ENCODE measurements at regions of chr6 and their contacts with region 1.

Region 1: GRCh38 chr6:10478187-10479040 is 42.7 kb upstream of the GCNT2 start:
- DNase-seq: peak; percentile 66
- CTCF ChIP-seq: peak; percentile 49

Region 2: GRCh38 chr6:10465629-10466504 is 12.5 kb before region 1 on chr6:
- CTCF ChIA-PET with region 1: interaction called, 29 read pairs
- POLR2A ChIA-PET with region 1: no interaction called
- DNase-seq: peak; percentile 50
- CTCF ChIP-seq: peak; percentile 59

Region 3: DNA sequence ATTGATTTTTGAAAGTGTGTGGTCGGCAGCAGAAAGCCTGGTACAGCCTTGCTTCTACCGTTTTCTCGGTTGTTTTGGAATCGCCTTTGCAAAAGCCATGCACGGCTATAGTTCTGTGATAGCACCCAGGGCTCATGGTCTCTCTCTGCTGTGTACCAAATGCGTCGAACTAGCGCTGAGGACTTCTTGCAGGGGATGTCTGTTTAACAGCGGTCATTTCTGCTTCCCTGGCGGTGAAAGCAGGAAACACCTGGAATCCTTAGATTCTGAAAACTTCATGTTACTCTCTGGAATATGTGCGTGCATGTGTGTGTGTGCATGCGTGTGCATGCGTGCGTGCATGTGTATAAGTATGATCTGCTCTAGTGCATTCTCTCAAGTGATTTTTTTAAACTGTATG is 16.6 kb after region 1 on chr6:
- CTCF ChIA-PET with region 1: interaction called, 12 read pairs
- POLR2A ChIA-PET with region 1: no interaction called
- DNase-seq: no peak
- CTCF ChIP-seq: no peak

Region 4: GRCh38 chr6:10505529-10505928 is 27.1 kb after region 1 on chr6:
- CTCF ChIA-PET with region 1: interaction called, 16 read pairs
- POLR2A ChIA-PET with region 1: no interaction called
- DNase-seq: no peak
- CTCF ChIP-seq: no peak

Region 5: GRCh38 chr6:10510592-10511367 is 32.4 kb after region 1 on chr6:
- CTCF ChIA-PET with region 1: interaction called, 16 read pairs
- POLR2A ChIA-PET with region 1: no interaction called
- DNase-seq: peak; percentile 77
- CTCF ChIP-seq: peak; percentile 65

Region 6: GRCh38 chr6:10793695-10794094 is 315.3 kb after region 1 on chr6:
- CTCF ChIA-PET with region 1: interaction called, 16 read pairs
- POLR2A ChIA-PET with region 1: no interaction called
- DNase-seq: no peak
- CTCF ChIP-seq: no peak

Region 7: GRCh38 chr6:10800829-10801535 is 322.6 kb after region 1 on chr6:
- CTCF ChIA-PET with region 1: interaction called, 75 read pairs
- POLR2A ChIA-PET with region 1: no interaction called
- DNase-seq: peak; percentile 81
- CTCF ChIP-seq: peak; percentile 92

Measured in GM10248 (cell line).